Activated CD4-positive, alpha-beta T cell treated with anti-CD3 and anti-CD28 coated beads, Interleukin-2, amount 10 ng/mL, durations not matched to agents 24 days and 14 days (primary cell): ENCODE measurements at regions of chr10 and their contacts with region 1.

Region 1: GRCh38 chr10:120948889-120949608 is 97.9 kb downstream of the WDR11 start:
- DNase-seq: peak; percentile 90
- H3K4me3 Mint-ChIP-seq: peak overlapping the region; percentile 45
- H3K27ac Mint-ChIP-seq: no peak overlapping the region
- H3K4me1 Mint-ChIP-seq: peaks cover 4% of the 10 kb centered on the region
- H3K27me3 Mint-ChIP-seq: peaks cover 36% of the 10 kb centered on the region

Region 2: DNA sequence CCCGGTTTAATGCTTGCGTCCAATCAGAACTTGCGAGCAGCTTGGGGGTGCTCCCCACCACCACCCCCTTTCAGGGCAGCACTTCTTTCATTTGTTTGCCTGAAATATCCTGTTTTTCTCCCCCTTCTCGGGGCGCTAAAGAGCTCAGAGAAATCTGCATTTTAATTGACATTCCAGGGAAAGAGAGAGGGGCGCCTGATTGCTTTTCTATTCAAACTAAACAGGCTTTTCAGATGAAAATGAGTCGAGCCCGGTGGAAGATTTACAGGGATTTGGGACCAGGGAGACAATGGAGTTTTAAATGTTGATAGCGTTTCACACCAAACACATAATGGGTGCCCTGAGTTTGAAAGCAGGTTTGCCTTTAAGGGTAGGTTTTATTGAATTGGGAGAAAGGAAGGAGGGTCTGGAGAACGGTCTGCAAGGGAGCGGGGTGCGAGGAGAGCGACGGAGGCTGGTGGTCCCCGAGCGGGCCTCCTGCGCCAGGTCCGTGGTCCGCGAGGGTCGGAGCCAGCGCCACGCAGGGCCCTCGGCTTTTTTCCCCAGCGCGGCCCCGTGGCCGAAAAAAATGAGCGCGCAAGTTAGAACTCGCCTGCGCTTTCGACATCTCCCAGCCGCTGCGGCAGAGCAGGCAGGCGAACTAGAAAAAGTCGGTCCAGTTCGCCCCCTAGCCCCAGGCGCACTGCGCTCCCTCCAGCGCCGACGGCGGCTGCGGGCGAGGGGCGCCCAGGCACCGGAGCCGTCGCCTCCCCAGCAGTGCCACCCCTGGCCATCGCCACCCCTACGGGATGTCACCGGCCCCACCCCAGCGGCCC is 647.8 kb after region 1 on chr10:
- intact Hi-C with region 1: no loop called
- DNase-seq: no peak
- H3K4me3 Mint-ChIP-seq: peak overlapping the region; percentile 26
- H3K27ac Mint-ChIP-seq: peak overlapping the region; percentile 12
- H3K4me1 Mint-ChIP-seq: peaks cover 6% of the 10 kb centered on the region
- H3K27me3 Mint-ChIP-seq: peaks cover 54% of the 10 kb centered on the region

Region 3: GRCh38 chr10:121900443-121901174 is 951.6 kb after region 1 on chr10:
- intact Hi-C with region 1: loop called (anchors 5 kb)
- DNase-seq: peak; percentile 70
- H3K4me3 Mint-ChIP-seq: no peak overlapping the region
- H3K27ac Mint-ChIP-seq: no peak overlapping the region
- H3K4me1 Mint-ChIP-seq: no peaks in the 10 kb centered on the region
- H3K27me3 Mint-ChIP-seq: no peaks in the 10 kb centered on the region